Activated CD4-positive, alpha-beta T cell treated with anti-CD3 and anti-CD28 coated beads for 36 hours (primary cell): ENCODE measurements at regions of chr3 and their contacts with region 1.

Region 1: DNA sequence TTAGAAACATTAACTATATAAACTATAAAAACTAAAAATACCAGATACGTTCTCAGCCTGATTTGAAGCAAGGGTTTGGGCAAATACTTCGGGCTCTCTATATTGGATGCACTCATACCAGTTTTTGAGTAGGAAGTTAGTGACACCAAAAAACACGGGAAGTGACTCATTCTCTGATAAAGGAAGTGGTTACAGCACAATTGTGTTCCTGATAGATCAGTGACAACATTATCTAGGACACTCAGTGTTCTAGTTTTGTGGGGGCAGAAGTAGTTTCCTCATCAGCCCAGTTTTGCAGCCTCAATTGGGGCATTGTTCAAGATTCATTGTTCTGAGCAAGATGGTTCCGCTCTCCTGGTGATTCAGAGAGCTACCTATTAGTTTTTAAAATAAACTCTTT is 469.6 kb upstream of the DPPA4 start:
- DNase-seq: peak; percentile 37
- ATAC-seq: peak; percentile 88
- H3K4me3 Mint-ChIP-seq: peak overlapping the region; percentile 23
- H3K27ac Mint-ChIP-seq: peak overlapping the region; percentile 69
- H3K4me1 Mint-ChIP-seq: peaks cover 37% of the 10 kb centered on the region
- H3K27me3 Mint-ChIP-seq: peaks cover 2% of the 10 kb centered on the region

Region 2: GRCh38 chr3:109553591-109554371 is 253.1 kb before region 1 on chr3:
- CTCF ChIA-PET with region 1: no interaction called
- POLR2A ChIA-PET with region 1: no interaction called
- intact Hi-C with region 1: loop called in 1 of 2 experiments (anchors 2 kb)
- DNase-seq: no peak
- ATAC-seq: no peak
- H3K4me3 Mint-ChIP-seq: no peak overlapping the region
- H3K27ac Mint-ChIP-seq: no peak overlapping the region
- H3K4me1 Mint-ChIP-seq: peaks cover 8% of the 10 kb centered on the region
- H3K27me3 Mint-ChIP-seq: no peaks in the 10 kb centered on the region

Region 3: DNA sequence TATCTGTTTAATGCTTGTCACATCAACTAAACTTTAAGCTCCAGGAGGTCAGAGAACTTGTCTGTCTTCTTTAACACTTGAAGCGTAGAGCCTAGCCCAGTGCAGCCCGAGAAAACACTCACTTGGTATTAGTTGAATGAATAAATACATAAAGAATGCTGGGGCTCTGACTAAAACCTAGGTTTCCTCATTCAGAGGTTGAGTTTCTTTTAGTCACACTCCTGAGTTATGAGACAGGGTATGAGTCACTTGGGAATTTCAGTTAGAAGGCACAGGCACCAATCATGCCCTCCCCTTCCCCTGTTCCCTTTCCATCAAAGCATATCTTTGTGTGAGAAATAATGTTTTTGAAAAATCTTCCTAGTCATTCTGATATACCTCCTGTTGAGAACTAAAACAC is 120.2 kb after region 1 on chr3:
- CTCF ChIA-PET with region 1: no interaction called
- POLR2A ChIA-PET with region 1: no interaction called
- intact Hi-C with region 1: loop called in 1 of 2 experiments (anchors 2 kb)
- DNase-seq: peak; percentile 26
- ATAC-seq: peak; percentile 96
- H3K4me3 Mint-ChIP-seq: no peak overlapping the region
- H3K27ac Mint-ChIP-seq: no peak overlapping the region
- H3K4me1 Mint-ChIP-seq: peaks cover 5% of the 10 kb centered on the region
- H3K27me3 Mint-ChIP-seq: peaks cover 2% of the 10 kb centered on the region

Region 4: DNA sequence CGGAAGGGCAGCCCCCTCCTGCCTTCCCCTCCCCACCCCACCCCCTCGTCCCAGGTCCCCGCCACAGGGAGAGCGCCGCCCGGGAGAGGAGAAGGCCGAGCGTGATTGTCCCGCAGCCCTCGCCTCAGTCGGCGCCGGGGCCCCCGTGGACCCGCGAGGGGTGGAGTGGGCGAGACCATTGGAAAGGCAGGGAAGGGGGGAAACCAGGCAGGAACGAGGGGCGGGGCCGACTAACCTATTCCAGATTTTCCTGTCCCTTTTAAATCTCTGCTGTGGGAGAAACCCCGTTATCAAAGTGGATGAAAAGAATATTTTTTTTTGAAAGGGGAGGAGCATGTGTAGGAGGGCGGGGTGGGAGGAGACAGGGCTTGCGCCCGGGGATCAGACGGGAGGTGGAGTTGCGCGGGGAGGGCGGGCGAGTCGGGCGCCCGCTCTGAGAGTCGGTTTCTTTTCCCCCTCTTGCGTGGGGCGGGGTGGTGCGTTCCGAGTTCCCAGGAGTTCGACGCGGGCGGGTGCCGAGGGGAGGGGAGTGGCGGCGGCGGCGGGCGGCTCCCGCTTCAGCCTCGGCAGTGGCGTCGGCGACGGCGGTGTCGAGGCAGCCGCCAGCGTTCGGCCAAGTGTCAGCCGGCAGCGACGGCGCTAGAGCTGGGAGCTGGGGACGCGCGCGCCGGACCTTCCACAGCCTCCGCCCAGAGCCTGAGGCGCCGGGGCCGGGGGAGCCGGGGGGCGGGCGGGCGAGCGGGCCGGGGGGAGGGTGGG is 1264.5 kb after region 1 on chr3 and contains the start of gene NECTIN3:
- CTCF ChIA-PET with region 1: no interaction called
- POLR2A ChIA-PET with region 1: no interaction called
- intact Hi-C with region 1: loop called (anchors 5 to 10 kb)
- DNase-seq: peak; percentile 91
- ATAC-seq: peak; percentile 95
- H3K4me3 Mint-ChIP-seq: peak within 1 kb of the TSS; percentile 83
- H3K27ac Mint-ChIP-seq: peak within 1 kb of the TSS; percentile 80
- H3K4me1 Mint-ChIP-seq: peaks cover 28% of the 10 kb centered on the region
- H3K27me3 Mint-ChIP-seq: peaks cover 40% of the 10 kb centered on the region
- total RNA-seq, gene NECTIN3: 5.1 to 5.9 TPM

Region 5: DNA sequence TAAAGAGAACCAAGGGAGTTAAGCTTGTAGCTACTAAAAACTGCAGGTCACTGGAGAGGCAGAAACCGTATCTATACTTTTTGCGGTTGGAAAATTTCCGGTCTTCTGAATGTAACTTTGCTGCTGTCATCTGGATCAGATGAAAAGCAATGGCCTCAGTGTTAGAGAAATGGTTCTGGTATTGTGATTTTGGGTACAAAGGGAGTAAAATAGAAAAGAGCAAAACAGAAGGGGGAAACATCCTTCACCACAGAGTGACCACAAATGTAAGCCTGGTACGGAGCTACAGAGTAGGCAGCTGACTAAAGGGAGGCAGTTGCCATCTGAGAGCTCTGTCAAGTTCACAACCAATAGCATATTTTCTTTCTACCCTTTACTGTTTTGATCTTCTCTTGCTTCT is 1740.7 kb after region 1 on chr3:
- CTCF ChIA-PET with region 1: no interaction called
- POLR2A ChIA-PET with region 1: no interaction called
- intact Hi-C with region 1: loop called (anchors 2 to 5 kb)
- DNase-seq: peak; percentile 75
- ATAC-seq: peak; percentile 70
- H3K4me3 Mint-ChIP-seq: no peak overlapping the region
- H3K27ac Mint-ChIP-seq: no peak overlapping the region
- H3K4me1 Mint-ChIP-seq: peaks cover 35% of the 10 kb centered on the region
- H3K27me3 Mint-ChIP-seq: no peaks in the 10 kb centered on the region